WTC11 (cell line): ENCODE measurements at regions of chr10 and their contacts with region 1.

Region 1: DNA sequence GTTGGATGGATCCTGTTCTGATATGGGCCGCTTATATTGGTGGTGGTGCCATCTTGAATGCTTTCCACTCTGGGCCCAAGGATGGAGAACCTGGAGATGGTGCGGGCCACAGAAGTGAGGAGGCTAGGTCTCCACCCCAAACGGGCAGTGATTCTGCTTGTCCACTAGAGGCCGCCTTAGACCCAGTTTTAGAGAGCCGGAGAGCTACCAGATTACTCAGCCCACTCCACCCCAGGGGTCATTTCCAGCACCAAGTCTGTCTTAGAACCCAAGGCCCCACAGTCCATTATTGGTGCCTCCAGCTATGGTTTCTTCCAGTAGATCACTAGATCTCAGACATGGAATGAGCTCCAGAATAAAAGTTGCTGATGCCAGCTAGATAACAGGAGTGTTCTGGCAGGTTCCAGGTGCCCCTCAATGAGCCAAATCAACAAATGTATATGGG is 11.8 kb upstream of the CAMK2G start:
- DNase-seq: peak; percentile 78
- ATAC-seq: peak; percentile 95
- H3K4me3 Mint-ChIP-seq: no peak overlapping the region
- H3K27ac Mint-ChIP-seq: no peak overlapping the region
- H3K4me1 Mint-ChIP-seq: peaks cover 19% of the 10 kb centered on the region
- H3K27me3 Mint-ChIP-seq: no peaks in the 10 kb centered on the region
- CTCF ChIP-seq: peak; percentile 79

Region 2: GRCh38 chr10:73908853-73909538 is 22.9 kb after region 1 on chr10:
- CTCF ChIA-PET with region 1: interaction called, 15 read pairs
- POLR2A ChIA-PET with region 1: interaction called, 3 read pairs
- DNase-seq: no peak
- ATAC-seq: no peak
- H3K4me3 Mint-ChIP-seq: no peak overlapping the region
- H3K27ac Mint-ChIP-seq: no peak overlapping the region
- H3K4me1 Mint-ChIP-seq: peaks cover 60% of the 10 kb centered on the region
- H3K27me3 Mint-ChIP-seq: peaks cover 46% of the 10 kb centered on the region
- CTCF ChIP-seq: no peak

Region 3: GRCh38 chr10:73997787-73998622 is 111.9 kb after region 1 on chr10 and contains the start of gene VCL:
- CTCF ChIA-PET with region 1: interaction called, 15 read pairs
- POLR2A ChIA-PET with region 1: no interaction called
- DNase-seq: peak; percentile 99
- ATAC-seq: peak; percentile 93
- H3K4me3 Mint-ChIP-seq: peak within 1 kb of the TSS; percentile 98
- H3K27ac Mint-ChIP-seq: peak within 1 kb of the TSS; percentile 100
- H3K4me1 Mint-ChIP-seq: peaks cover 41% of the 10 kb centered on the region
- H3K27me3 Mint-ChIP-seq: peaks cover 2% of the 10 kb centered on the region; the same call in 1 of the 2 replicates
- CTCF ChIP-seq: no peak
- total RNA-seq, gene VCL: 225 to 236 TPM (median 234 TPM) in 3 replicates

Region 4: DNA sequence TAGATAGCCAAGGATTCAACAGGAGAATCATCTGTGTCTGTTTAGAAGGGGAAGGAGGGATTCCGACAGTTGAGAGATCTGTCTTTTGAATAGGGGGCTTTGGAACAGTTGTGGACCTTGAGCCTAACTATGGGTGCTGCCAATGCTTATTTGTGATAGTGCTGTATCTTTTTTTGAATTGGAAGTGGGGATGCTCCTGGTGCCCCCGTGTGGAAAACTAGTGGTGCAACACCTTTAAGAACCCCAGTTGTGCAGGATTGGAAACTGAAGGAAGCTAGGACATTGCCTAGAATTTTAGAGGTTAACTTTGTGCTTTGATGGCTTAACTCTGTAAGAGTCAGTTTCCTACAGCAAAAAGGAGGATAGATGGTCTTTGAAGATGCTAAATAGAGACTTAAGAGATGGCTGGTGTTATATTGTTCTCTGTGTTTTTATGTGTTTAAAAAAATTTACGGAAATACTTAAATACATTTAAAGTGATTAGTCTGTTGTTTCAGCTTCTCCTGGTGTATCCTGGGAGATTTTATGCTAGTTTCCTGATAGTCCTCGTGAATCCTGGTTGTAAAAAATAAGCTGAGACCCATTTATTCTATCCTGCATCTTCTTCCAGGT is 195.2 kb after region 1 on chr10:
- CTCF ChIA-PET with region 1: interaction called, 57 read pairs
- POLR2A ChIA-PET with region 1: no interaction called
- DNase-seq: peak; percentile 40
- ATAC-seq: peak; percentile 71
- H3K4me3 Mint-ChIP-seq: no peak overlapping the region
- H3K27ac Mint-ChIP-seq: peak overlapping the region; percentile 54; the same call in 1 of the 2 replicates
- H3K4me1 Mint-ChIP-seq: peaks cover 52% of the 10 kb centered on the region
- H3K27me3 Mint-ChIP-seq: no peaks in the 10 kb centered on the region
- CTCF ChIP-seq: peak; percentile 59

Region 5: GRCh38 chr10:74206746-74207145 is 320.6 kb after region 1 on chr10:
- CTCF ChIA-PET with region 1: no interaction called
- POLR2A ChIA-PET with region 1: no interaction called
- DNase-seq: no peak
- ATAC-seq: no peak
- H3K4me3 Mint-ChIP-seq: no peak overlapping the region
- H3K27ac Mint-ChIP-seq: no peak overlapping the region
- H3K4me1 Mint-ChIP-seq: peaks cover 16% of the 10 kb centered on the region
- H3K27me3 Mint-ChIP-seq: no peaks in the 10 kb centered on the region
- CTCF ChIP-seq: no peak